GM12878 (cell line): ENCODE measurements at regions of chr3 and their contacts with region 1.

Region 1: GRCh38 chr3:27357665-27358258 is 11.4 kb downstream of the NEK10 start:
- DNase-seq: no peak
- ATAC-seq: peak; percentile 96
- H3K4me3 ChIP-seq: no peak overlapping the region
- H3K27ac ChIP-seq: no peak overlapping the region
- H3K4me1 ChIP-seq: peaks cover 14% of the 10 kb centered on the region
- H3K27me3 ChIP-seq: no peaks in the 10 kb centered on the region
- CTCF ChIP-seq: peak; percentile 72 to 84 (median 72)
- EP300 ChIP-seq: no peak
- POLR2A ChIP-seq: no peak
- RAD21 ChIP-seq: peak; percentile 82

Region 2: GRCh38 chr3:27335571-27335970 is 22.2 kb before region 1 on chr3:
- CTCF ChIA-PET with region 1: no interaction called
- POLR2A ChIA-PET with region 1: no interaction called
- RAD21 ChIA-PET with region 1: no interaction called
- SMC1A ChIA-PET with region 1: no interaction called
- in situ Hi-C with region 1: no loop called
- intact Hi-C with region 1: no loop called
- DNase-seq: no peak
- ATAC-seq: no peak
- H3K4me3 ChIP-seq: no peak overlapping the region
- H3K27ac ChIP-seq: no peak overlapping the region
- H3K4me1 ChIP-seq: no peaks in the 10 kb centered on the region
- H3K27me3 ChIP-seq: no peaks in the 10 kb centered on the region
- CTCF ChIP-seq: no peak
- EP300 ChIP-seq: no peak
- POLR2A ChIP-seq: no peak
- RAD21 ChIP-seq: no peak

Region 3: GRCh38 chr3:27392950-27393679 is 35.4 kb after region 1 on chr3:
- CTCF ChIA-PET with region 1: interaction called, 5 read pairs
- POLR2A ChIA-PET with region 1: no interaction called
- RAD21 ChIA-PET with region 1: interaction called, 12 read pairs
- SMC1A ChIA-PET with region 1: interaction called, 7 read pairs
- in situ Hi-C with region 1: no loop called
- intact Hi-C with region 1: no loop called
- DNase-seq: peak; percentile 15
- ATAC-seq: peak; percentile 87
- H3K4me3 ChIP-seq: no peak overlapping the region
- H3K27ac ChIP-seq: peak overlapping the region; percentile 50; the same call in 1 of the 2 replicates
- H3K4me1 ChIP-seq: no peaks in the 10 kb centered on the region
- H3K27me3 ChIP-seq: no peaks in the 10 kb centered on the region
- CTCF ChIP-seq: no peak
- EP300 ChIP-seq: peak; percentile 9 to 35; a peak in 1 of 4 replicates
- POLR2A ChIP-seq: no peak
- RAD21 ChIP-seq: no peak

Region 4: DNA sequence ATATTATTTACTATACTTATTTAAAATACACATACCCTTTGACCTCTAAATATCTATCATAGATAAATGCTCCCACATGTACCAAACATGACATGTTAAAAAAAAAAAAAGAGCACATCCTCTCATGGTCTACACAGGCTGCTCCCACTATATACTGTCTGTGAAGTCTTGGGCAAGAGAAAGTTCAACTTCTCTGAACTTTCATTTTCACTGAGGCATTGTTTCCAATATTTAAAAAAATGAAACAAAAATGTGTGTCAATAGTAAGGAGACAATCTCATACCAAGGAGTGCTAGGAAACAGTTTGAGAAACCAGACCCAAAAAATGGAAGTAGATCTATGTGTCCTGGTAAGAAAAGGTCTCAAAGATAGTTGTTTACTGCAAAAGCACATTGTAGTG is 97.2 kb after region 1 on chr3:
- CTCF ChIA-PET with region 1: interaction called, 11 read pairs
- POLR2A ChIA-PET with region 1: no interaction called
- RAD21 ChIA-PET with region 1: interaction called, 3 read pairs
- SMC1A ChIA-PET with region 1: interaction called, 9 read pairs
- in situ Hi-C with region 1: no loop called
- intact Hi-C with region 1: no loop called
- DNase-seq: no peak
- ATAC-seq: peak; percentile 87
- H3K4me3 ChIP-seq: no peak overlapping the region
- H3K27ac ChIP-seq: peak overlapping the region; percentile 52; the same call in 1 of the 2 replicates
- H3K4me1 ChIP-seq: peaks cover 14% of the 10 kb centered on the region
- H3K27me3 ChIP-seq: no peaks in the 10 kb centered on the region
- CTCF ChIP-seq: no peak
- EP300 ChIP-seq: no peak
- POLR2A ChIP-seq: no peak
- RAD21 ChIP-seq: no peak

Region 5: DNA sequence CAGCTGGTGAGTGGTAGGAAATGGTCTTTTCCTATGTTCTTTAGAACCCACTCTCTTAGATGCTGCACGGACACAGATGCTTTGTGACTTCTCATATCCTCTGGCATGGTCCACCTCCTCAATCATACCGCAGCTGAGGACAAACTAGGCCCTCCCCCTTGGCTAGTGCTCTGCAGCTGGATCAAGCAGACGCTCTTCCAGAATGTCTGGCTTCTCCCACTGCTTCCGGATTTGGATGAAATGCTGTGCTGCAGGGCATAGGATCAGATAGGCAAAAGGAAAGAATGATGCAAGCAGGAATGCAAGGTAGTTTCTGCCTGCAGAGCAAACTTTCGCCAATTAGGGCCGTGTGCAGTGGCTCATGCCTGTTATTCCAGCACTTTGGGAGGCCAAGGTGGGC is 202.1 kb after region 1 on chr3:
- CTCF ChIA-PET with region 1: no interaction called
- POLR2A ChIA-PET with region 1: no interaction called
- RAD21 ChIA-PET with region 1: no interaction called
- SMC1A ChIA-PET with region 1: no interaction called
- in situ Hi-C with region 1: no loop called
- intact Hi-C with region 1: no loop called
- DNase-seq: no peak
- ATAC-seq: no peak
- H3K4me3 ChIP-seq: no peak overlapping the region
- H3K27ac ChIP-seq: no peak overlapping the region
- H3K4me1 ChIP-seq: no peaks in the 10 kb centered on the region
- H3K27me3 ChIP-seq: no peaks in the 10 kb centered on the region
- CTCF ChIP-seq: no peak
- EP300 ChIP-seq: no peak
- POLR2A ChIP-seq: no peak
- RAD21 ChIP-seq: no peak

Region 6: GRCh38 chr3:27666708-27667107 is 308.9 kb after region 1 on chr3:
- CTCF ChIA-PET with region 1: no interaction called
- POLR2A ChIA-PET with region 1: no interaction called
- RAD21 ChIA-PET with region 1: no interaction called
- SMC1A ChIA-PET with region 1: no interaction called
- in situ Hi-C with region 1: no loop called
- intact Hi-C with region 1: loop called (anchors 5 kb)
- DNase-seq: no peak
- ATAC-seq: peak; percentile 22; the same call in 1 of the 3 replicates
- H3K4me3 ChIP-seq: no peak overlapping the region
- H3K27ac ChIP-seq: no peak overlapping the region
- H3K4me1 ChIP-seq: peaks cover 4% of the 10 kb centered on the region
- H3K27me3 ChIP-seq: no peaks in the 10 kb centered on the region
- CTCF ChIP-seq: no peak
- EP300 ChIP-seq: no peak
- POLR2A ChIP-seq: no peak
- RAD21 ChIP-seq: no peak